AG04449 (cell line): ENCODE measurements at regions of chr11 and their contacts with region 1.

Region 1: GRCh38 chr11:75142714-75143419 is 8.0 kb upstream of the SLCO2B1 start:
- DNase-seq: peak; percentile 63
- H3K4me3 ChIP-seq: no peak overlapping the region
- CTCF ChIP-seq: no peak

Region 2: DNA sequence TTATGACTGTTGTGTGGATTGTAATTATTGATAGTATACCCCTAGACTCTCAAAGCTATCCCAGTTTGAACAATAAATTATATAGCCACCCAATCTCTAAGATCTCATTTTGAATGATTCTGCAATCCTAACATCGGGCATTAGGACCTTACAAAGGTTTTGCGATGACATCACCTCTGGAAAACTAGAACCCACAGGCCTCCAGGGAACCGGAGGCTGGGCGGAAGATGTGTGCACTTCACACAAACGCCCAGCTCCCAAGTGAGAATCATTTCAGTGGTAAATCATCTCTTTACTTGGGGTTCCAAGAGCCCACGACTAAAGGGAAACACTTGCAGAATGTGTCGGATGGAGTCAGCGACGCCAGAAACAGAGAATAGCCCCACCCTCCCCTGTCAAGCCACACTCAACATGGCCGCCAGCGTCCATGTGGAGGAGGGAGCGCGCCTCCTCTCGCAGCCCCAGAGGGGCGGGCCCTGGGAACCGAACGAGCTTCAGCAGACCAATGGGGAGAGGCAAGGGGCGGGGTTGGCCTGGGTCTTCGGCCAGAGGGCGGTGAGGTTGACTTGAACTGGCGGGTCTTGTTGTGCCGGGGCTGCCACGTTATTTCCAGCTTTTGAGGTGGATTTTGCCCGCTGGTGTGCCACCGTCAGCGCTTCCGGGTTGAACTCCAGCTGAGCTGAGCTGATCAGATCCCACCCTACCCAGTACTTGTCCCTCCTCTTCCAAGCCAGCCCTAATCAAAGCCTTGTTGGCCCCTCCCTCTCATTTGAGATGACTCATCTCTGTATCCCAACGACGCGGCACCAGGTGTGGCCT is 1363.6 kb before region 1 on chr11:
- CTCF ChIA-PET with region 1: no interaction called
- POLR2A ChIA-PET with region 1: no interaction called
- DNase-seq: peak; percentile 90
- H3K4me3 ChIP-seq: peak overlapping the region; percentile 62
- CTCF ChIP-seq: no peak

Region 3: DNA sequence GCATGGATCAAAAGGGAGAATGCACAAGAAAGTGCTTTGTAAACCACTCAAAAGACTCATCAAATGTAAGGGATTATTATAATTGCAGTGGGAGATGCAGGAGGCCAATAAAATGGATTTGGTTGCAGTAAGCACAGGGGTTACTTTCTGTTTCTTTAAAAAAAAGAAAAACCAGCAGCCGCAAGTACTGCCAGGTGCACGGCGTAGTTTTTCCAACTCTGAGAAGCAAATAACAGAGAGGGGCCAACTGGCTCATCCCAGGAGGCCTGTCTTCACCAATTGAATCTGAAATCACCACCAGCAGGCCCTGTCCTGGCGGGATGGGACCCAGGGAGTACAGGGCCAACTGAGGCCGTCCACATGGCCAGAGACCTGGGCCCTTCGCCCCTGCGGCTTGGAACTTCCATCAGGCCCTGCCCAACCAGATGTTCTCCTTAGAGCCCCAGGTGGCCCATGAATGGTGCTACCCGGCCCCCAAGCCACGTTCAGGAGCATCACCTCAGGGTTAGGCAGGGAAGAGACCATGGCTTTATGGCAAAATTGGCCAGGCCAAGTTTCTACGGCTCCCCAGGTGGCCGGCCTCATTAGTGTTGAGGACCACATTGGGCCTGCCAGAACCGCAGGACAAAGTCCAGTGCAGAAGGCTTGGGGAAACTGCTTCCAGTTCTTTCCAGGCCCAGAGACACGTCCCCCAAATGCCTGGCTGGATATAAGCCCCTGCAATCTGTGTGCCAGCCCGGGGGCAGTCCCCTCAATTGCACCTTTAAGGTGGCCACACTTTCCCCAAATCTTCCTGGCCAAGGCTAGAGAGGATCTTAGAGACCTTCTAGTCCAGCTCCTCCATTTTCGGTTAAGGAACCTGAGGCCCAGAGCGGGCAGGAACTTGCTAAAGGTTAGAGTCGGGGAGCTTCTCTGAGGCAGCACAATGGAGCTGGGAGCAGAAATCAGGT is 473.4 kb before region 1 on chr11:
- CTCF ChIA-PET with region 1: no interaction called
- POLR2A ChIA-PET with region 1: no interaction called
- DNase-seq: no peak
- H3K4me3 ChIP-seq: no peak overlapping the region
- CTCF ChIP-seq: no peak

Region 4: GRCh38 chr11:74929431-74930363 is 213.2 kb before region 1 on chr11:
- CTCF ChIA-PET with region 1: interaction called, 31 read pairs
- POLR2A ChIA-PET with region 1: no interaction called
- DNase-seq: peak; percentile 74
- H3K4me3 ChIP-seq: no peak overlapping the region
- CTCF ChIP-seq: peak; percentile 76

Region 5: GRCh38 chr11:75103380-75104026 is 39.4 kb before region 1 on chr11:
- CTCF ChIA-PET with region 1: interaction called, 12 read pairs
- POLR2A ChIA-PET with region 1: no interaction called
- DNase-seq: peak; percentile 29
- H3K4me3 ChIP-seq: no peak overlapping the region
- CTCF ChIP-seq: no peak

Region 6: DNA sequence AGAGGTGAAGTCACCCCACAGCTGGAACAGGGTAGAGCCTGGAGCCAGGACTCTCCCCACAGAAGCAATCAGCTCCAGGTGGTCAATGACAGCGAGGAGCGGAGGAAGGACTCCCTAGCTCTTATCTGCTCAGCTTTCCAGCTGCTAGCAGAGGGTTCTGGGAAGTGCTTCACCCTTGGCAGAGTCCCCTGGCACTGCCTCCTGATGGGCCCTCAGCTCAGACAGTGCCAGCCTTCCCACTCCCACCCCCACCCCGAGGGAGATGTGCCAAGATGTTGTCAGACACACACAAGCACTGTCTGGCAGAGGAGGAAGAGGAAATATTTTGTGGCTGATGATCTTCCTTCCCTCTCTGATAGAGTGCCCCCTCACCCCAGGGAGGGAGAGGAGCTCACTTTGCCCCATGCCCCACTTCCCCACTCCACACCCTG is 52.3 kb after region 1 on chr11:
- CTCF ChIA-PET with region 1: interaction called, 23 read pairs
- POLR2A ChIA-PET with region 1: no interaction called
- DNase-seq: no peak
- H3K4me3 ChIP-seq: no peak overlapping the region
- CTCF ChIP-seq: no peak

Region 7: GRCh38 chr11:75223954-75224643 is 81.2 kb after region 1 on chr11:
- CTCF ChIA-PET with region 1: interaction called, 11 read pairs
- POLR2A ChIA-PET with region 1: no interaction called
- DNase-seq: no peak
- H3K4me3 ChIP-seq: no peak overlapping the region
- CTCF ChIP-seq: no peak

Region 8: GRCh38 chr11:75270896-75271418 is 128.1 kb after region 1 on chr11:
- CTCF ChIA-PET with region 1: interaction called, 16 read pairs
- POLR2A ChIA-PET with region 1: no interaction called
- DNase-seq: no peak
- H3K4me3 ChIP-seq: no peak overlapping the region
- CTCF ChIP-seq: peak; percentile 5